Left ventricle myocardium superior (tissue), 1 donor: ENCODE measurements at regions of chr1 and their contacts with region 1.

Region 1: DNA sequence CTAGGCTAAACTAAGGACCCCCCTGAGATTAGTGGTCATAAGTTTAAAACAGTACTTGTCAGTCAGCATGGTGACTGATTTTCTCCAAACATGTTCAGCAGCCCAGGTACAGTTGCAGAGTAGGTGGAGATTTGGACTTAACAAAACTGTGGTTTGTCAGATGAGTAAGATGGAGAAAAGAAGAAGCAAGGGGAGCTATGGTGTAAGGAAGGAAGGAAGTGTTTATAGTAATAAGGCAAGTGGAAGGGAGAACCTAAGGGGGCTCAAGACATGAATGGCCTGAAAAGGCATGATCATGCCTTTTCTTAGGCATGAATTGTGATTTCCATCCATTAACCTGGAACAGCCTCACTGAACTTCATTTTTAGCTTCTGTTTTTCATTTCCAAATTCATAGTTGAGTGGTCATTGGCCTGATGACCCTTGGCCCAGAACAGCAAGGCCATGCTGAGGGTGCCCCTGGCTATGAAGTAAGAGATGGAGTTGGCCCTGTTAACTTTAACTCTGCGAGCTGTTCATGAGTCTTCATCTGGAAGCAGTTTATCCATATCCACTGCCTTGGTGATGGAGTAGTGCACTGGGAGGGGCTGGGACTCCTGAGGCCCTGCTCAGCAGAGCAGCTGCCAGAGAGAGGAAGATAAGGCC is 60.7 kb downstream of the LRRC8D start:
- DNase-seq: no peak
- ATAC-seq: peak; percentile 23

Region 2: GRCh38 chr1:89739013-89739843 is 142.3 kb before region 1 on chr1:
- intact Hi-C with region 1: no loop called
- DNase-seq: no peak
- ATAC-seq: peak; percentile 71

Region 3: GRCh38 chr1:89855413-89856123 is 26.0 kb before region 1 on chr1:
- intact Hi-C with region 1: loop called (anchors 1 kb)
- DNase-seq: no peak
- ATAC-seq: no peak